ENCODE measurements at regions of chr13 and their contacts with region 1.

Region 1: GRCh38 chr13:102870677-102871415 is 25.0 kb downstream of the ERCC5 start:
- DNase-seq: peak; percentile 55
- H3K4me3 ChIP-seq: no peak overlapping the region
- H3K27ac ChIP-seq: no peak overlapping the region
- H3K4me1 ChIP-seq: peaks cover 7% of the 10 kb centered on the region
- H3K27me3 ChIP-seq: no peaks in the 10 kb centered on the region
- CTCF ChIP-seq: peak; percentile 65 to 80
- POLR2A ChIP-seq: no peak

Region 2: GRCh38 chr13:102812611-102813287 is 58.1 kb before region 1 on chr13:
- CTCF ChIA-PET with region 1: no interaction called
- POLR2A ChIA-PET with region 1: no interaction called
- dilution Hi-C with region 1: no loop called
- intact Hi-C with region 1: no loop called
- DNase-seq: no peak
- H3K4me3 ChIP-seq: no peak overlapping the region
- H3K27ac ChIP-seq: no peak overlapping the region
- H3K4me1 ChIP-seq: peaks cover 2% of the 10 kb centered on the region
- H3K27me3 ChIP-seq: no peaks in the 10 kb centered on the region
- CTCF ChIP-seq: no peak
- POLR2A ChIP-seq: no peak

Region 3: GRCh38 chr13:102854675-102855074 is 16.2 kb before region 1 on chr13:
- CTCF ChIA-PET with region 1: interaction called, 14 read pairs
- POLR2A ChIA-PET with region 1: no interaction called
- dilution Hi-C with region 1: no loop called
- intact Hi-C with region 1: no loop called
- DNase-seq: no peak
- H3K4me3 ChIP-seq: no peak overlapping the region
- H3K27ac ChIP-seq: no peak overlapping the region
- H3K4me1 ChIP-seq: peaks cover 13% of the 10 kb centered on the region
- H3K27me3 ChIP-seq: no peaks in the 10 kb centered on the region
- CTCF ChIP-seq: no peak
- POLR2A ChIP-seq: no peak

Region 4: DNA sequence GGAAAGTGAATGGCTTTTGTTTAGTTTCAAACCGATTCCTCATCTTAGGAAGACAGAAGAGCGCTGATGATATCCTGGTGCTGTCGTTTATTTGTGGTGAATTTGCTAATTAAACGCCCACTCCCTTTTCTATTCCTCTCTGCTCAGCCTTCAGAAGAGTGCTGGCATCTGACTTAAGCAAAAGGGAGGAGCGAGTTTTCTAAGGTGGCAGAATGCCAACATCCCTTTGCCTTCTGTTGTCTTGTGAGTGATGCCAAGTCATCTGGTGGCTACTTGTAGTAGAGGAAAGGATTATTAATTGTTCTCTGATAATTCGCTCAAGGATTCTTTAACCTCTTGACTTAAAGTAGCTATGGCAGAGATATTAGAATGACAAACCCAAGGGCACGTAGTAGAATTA is 43.1 kb after region 1 on chr13:
- CTCF ChIA-PET with region 1: interaction called, 11 read pairs
- POLR2A ChIA-PET with region 1: no interaction called
- dilution Hi-C with region 1: no loop called
- intact Hi-C with region 1: no loop called
- DNase-seq: peak; percentile 73
- H3K4me3 ChIP-seq: no peak overlapping the region
- H3K27ac ChIP-seq: no peak overlapping the region
- H3K4me1 ChIP-seq: no peaks in the 10 kb centered on the region
- H3K27me3 ChIP-seq: peaks cover 5% of the 10 kb centered on the region in 2 experiments
- CTCF ChIP-seq: no peak
- POLR2A ChIP-seq: no peak

Region 5: DNA sequence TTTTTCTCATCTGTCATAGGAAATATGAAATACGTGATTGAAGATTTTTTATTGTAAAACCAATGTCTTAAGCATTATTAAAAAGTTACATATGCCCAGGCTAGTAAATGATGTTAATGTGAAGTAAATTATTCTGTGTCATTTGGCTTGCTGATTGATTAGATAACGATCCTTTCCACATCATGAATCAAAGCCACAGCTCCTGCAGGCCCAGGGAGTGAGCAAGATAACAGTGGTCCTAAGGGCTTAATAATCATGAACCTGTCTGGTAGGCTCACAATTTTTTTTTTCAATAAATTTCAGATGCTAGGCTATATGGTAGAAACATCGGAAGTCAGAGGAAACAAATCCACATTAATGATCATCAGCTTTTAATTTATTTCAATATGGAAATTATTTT is 464.4 kb after region 1 on chr13:
- CTCF ChIA-PET with region 1: no interaction called
- POLR2A ChIA-PET with region 1: no interaction called
- dilution Hi-C with region 1: no loop called
- intact Hi-C with region 1: no loop called
- DNase-seq: no peak
- H3K4me3 ChIP-seq: no peak overlapping the region
- H3K27ac ChIP-seq: no peak overlapping the region
- H3K4me1 ChIP-seq: no peaks in the 10 kb centered on the region
- H3K27me3 ChIP-seq: no peaks in the 10 kb centered on the region
- CTCF ChIP-seq: no peak
- POLR2A ChIP-seq: no peak

Measured in endothelial cell of umbilical vein (primary cell).